Caco-2 (cell line): ENCODE measurements at regions of chr9 and their contacts with region 1.

Region 1: DNA sequence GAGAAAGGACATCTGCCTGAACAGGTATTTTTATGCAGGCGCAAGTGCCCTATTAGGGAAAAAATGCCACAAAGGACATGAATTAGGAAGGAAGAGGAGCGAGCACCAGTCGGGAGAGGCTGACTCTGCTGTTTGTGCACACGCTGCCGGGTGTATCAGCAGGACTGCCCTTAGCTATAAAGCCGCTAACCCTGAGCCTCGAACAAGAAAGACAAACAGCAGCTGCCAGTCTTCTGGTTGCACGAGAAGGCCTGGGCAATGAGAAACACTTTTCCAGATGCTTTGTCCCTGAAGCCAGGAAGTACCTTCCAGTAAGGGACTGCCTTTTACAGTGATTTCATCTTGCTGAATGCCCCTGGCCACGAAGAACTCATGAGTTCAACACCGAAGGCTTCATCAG is 12.6 kb downstream of the QSOX2 start:
- DNase-seq: no peak
- H3K4me3 ChIP-seq: no peak overlapping the region
- H3K4me3 Mint-ChIP-seq: no peak overlapping the region
- H3K27ac Mint-ChIP-seq: no peak overlapping the region
- H3K4me1 ChIP-seq: no peaks in the 10 kb centered on the region
- H3K4me1 Mint-ChIP-seq: no peaks in the 10 kb centered on the region
- H3K27me3 ChIP-seq: no peaks in the 10 kb centered on the region
- H3K27me3 Mint-ChIP-seq: no peaks in the 10 kb centered on the region
- CTCF ChIP-seq: no peak

Region 2: GRCh38 chr9:136220017-136220729 is 12.8 kb before region 1 on chr9:
- CTCF ChIA-PET with region 1: interaction called, 10 read pairs
- POLR2A ChIA-PET with region 1: no interaction called
- intact Hi-C with region 1: no loop called
- DNase-seq: no peak
- H3K4me3 ChIP-seq: no peak overlapping the region
- H3K4me3 Mint-ChIP-seq: no peak overlapping the region
- H3K27ac Mint-ChIP-seq: no peak overlapping the region
- H3K4me1 ChIP-seq: no peaks in the 10 kb centered on the region
- H3K4me1 Mint-ChIP-seq: no peaks in the 10 kb centered on the region
- H3K27me3 ChIP-seq: no peaks in the 10 kb centered on the region
- H3K27me3 Mint-ChIP-seq: no peaks in the 10 kb centered on the region
- CTCF ChIP-seq: no peak

Region 3: GRCh38 chr9:136339173-136339957 is 106.4 kb after region 1 on chr9:
- CTCF ChIA-PET with region 1: no interaction called
- POLR2A ChIA-PET with region 1: no interaction called
- intact Hi-C with region 1: no loop called
- DNase-seq: peak in 1 of 2 experiments; percentile 74
- H3K4me3 ChIP-seq: no peak overlapping the region
- H3K4me3 Mint-ChIP-seq: no peak overlapping the region
- H3K27ac Mint-ChIP-seq: peak overlapping the region; percentile 35
- H3K4me1 ChIP-seq: no peaks in the 10 kb centered on the region
- H3K4me1 Mint-ChIP-seq: no peaks in the 10 kb centered on the region
- H3K27me3 ChIP-seq: no peaks in the 10 kb centered on the region
- H3K27me3 Mint-ChIP-seq: no peaks in the 10 kb centered on the region
- CTCF ChIP-seq: peak; percentile 84 to 87